GM23248 (cell line): ENCODE measurements at regions of chr9 and their contacts with region 1.

Region 1: GRCh38 chr9:37329576-37329975 is 92.9 kb upstream of the GRHPR start:
- DNase-seq: peak; percentile 57
- H3K4me3 ChIP-seq: no peak overlapping the region
- H3K27ac ChIP-seq: no peak overlapping the region
- H3K4me1 ChIP-seq: no peaks in the 10 kb centered on the region
- H3K27me3 ChIP-seq: no peaks in the 10 kb centered on the region

Region 2: GRCh38 chr9:36873247-36873875 is 456.2 kb before region 1 on chr9:
- in situ Hi-C with region 1: loop called (anchors 10 kb)
- DNase-seq: peak; percentile 61
- H3K4me3 ChIP-seq: no peak overlapping the region
- H3K27ac ChIP-seq: no peak overlapping the region
- H3K4me1 ChIP-seq: no peaks in the 10 kb centered on the region
- H3K27me3 ChIP-seq: peaks cover 33% of the 10 kb centered on the region

Region 3: GRCh38 chr9:37229882-37230487 is 99.6 kb before region 1 on chr9:
- in situ Hi-C with region 1: no loop called
- DNase-seq: peak; percentile 28
- H3K4me3 ChIP-seq: no peak overlapping the region
- H3K27ac ChIP-seq: no peak overlapping the region
- H3K4me1 ChIP-seq: no peaks in the 10 kb centered on the region
- H3K27me3 ChIP-seq: no peaks in the 10 kb centered on the region